Naive thymus-derived CD4-positive, alpha-beta T cell (primary cell): ENCODE measurements at regions of chr5 and their contacts with region 1.

Region 1: DNA sequence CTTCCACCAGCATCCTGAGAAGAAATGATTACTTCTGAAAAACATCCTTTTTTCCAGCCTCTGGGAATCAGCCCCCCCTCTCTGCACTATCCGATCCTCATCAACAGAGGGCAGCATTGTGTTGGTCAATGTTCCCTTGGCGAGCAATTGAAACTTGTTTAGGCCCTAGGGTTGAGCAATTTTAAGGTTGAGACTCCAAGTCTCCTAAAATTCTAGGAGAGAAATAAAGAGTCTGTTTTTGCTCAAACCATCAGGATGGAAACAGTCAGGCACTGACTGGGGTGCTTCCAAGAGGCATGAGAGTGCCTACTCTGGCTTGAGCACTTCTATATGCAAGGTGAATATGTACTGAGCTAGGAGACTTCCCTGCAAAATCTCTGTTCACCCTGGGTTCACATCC is 12.4 kb upstream of the CYFIP2 start:
- DNase-seq: no peak
- ATAC-seq: peak; percentile 44
- H3K4me3 ChIP-seq: peak overlapping the region; percentile 31
- H3K4me3 Mint-ChIP-seq: peak overlapping the region; percentile 62 to 79 (median 72)
- H3K27ac ChIP-seq: peak overlapping the region; percentile 66
- H3K27ac Mint-ChIP-seq: peak overlapping the region; percentile 86 to 98 (median 96)
- H3K4me1 ChIP-seq: peaks cover 93 to 97% of the 10 kb centered on the region in 2 donors
- H3K4me1 Mint-ChIP-seq: peaks cover 64 to 99% (median 94%) of the 10 kb centered on the region in 7 donors
- H3K27me3 ChIP-seq: no peaks in the 10 kb centered on the region
- H3K27me3 Mint-ChIP-seq: no peaks in the 10 kb centered on the region

Region 2: GRCh38 chr5:156618601-156619000 is 634.9 kb before region 1 on chr5:
- CTCF ChIA-PET with region 1: no interaction called
- POLR2A ChIA-PET with region 1: no interaction called
- intact Hi-C with region 1: no loop called
- DNase-seq: no peak
- ATAC-seq: no peak
- H3K4me3 ChIP-seq: no peak overlapping the region
- H3K4me3 Mint-ChIP-seq: no peak overlapping the region
- H3K27ac ChIP-seq: no peak overlapping the region
- H3K27ac Mint-ChIP-seq: no peak overlapping the region
- H3K4me1 ChIP-seq: no peaks in the 10 kb centered on the region
- H3K4me1 Mint-ChIP-seq: no peaks in the 10 kb centered on the region
- H3K27me3 ChIP-seq: no peaks in the 10 kb centered on the region
- H3K27me3 Mint-ChIP-seq: peaks cover 8 to 36% (median 28%) of the 10 kb centered on the region in 5 donors

Region 3: GRCh38 chr5:157159209-157159751 is 94.3 kb before region 1 on chr5:
- CTCF ChIA-PET with region 1: interaction called, 3 read pairs
- POLR2A ChIA-PET with region 1: interaction called, 12 read pairs
- intact Hi-C with region 1: no loop called
- DNase-seq: peak in 7 of 9 donors; percentile 31 to 76 (median 58)
- ATAC-seq: peak; percentile 84
- H3K4me3 ChIP-seq: peak overlapping the region; percentile 7
- H3K4me3 Mint-ChIP-seq: peak overlapping the region in 9 of 10 donors; percentile 42 to 76 (median 55)
- H3K27ac ChIP-seq: peak overlapping the region; percentile 67
- H3K27ac Mint-ChIP-seq: peak overlapping the region; percentile 68 to 84 (median 79)
- H3K4me1 ChIP-seq: peaks cover 43 to 44% of the 10 kb centered on the region in 2 donors
- H3K4me1 Mint-ChIP-seq: peaks cover 34 to 78% (median 70%) of the 10 kb centered on the region in 7 donors
- H3K27me3 ChIP-seq: no peaks in the 10 kb centered on the region
- H3K27me3 Mint-ChIP-seq: no peaks in the 10 kb centered on the region

Region 4: DNA sequence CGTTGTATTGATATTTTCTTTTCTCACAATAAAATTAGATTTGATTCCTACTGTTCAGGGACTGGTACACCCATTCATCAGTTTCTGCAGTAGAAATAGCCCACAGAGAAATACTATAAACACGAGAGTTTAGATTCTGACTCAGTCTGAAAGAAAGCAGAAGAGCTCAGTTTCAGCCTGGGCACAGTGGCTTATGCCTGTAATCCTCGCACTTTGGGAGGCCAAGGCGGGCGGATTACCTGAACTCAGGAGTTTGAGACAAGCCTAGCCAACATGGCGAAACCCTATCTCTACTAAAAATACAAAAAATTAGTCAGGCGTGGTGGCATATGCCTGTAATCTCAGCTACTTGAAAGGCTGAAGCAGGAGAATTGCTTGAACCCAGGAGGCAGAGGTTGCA is 64.3 kb before region 1 on chr5:
- CTCF ChIA-PET with region 1: interaction called, 6 read pairs
- POLR2A ChIA-PET with region 1: interaction called, 9 read pairs
- intact Hi-C with region 1: loop called in 1 of 2 experiments (anchors 2 kb)
- DNase-seq: no peak
- ATAC-seq: no peak
- H3K4me3 ChIP-seq: peak overlapping the region; percentile 68
- H3K4me3 Mint-ChIP-seq: peak overlapping the region; percentile 83 to 100 (median 96)
- H3K27ac ChIP-seq: peak overlapping the region; percentile 81
- H3K27ac Mint-ChIP-seq: peak overlapping the region; percentile 63 to 98 (median 91)
- H3K4me1 ChIP-seq: peaks cover 75 to 81% of the 10 kb centered on the region in 2 donors
- H3K4me1 Mint-ChIP-seq: peaks cover 56 to 94% (median 83%) of the 10 kb centered on the region in 7 donors
- H3K27me3 ChIP-seq: no peaks in the 10 kb centered on the region
- H3K27me3 Mint-ChIP-seq: no peaks in the 10 kb centered on the region

Region 5: GRCh38 chr5:157265714-157266285 is 12.3 kb after region 1 on chr5 and contains the start of gene CYFIP2:
- CTCF ChIA-PET with region 1: interaction called, 25 read pairs
- POLR2A ChIA-PET with region 1: interaction called, 200 read pairs
- intact Hi-C with region 1: loop called (anchors 1 kb)
- DNase-seq: peak; percentile 68 to 85 (median 84)
- ATAC-seq: peak; percentile 94
- H3K4me3 ChIP-seq: peak within 1 kb of the TSS; percentile 83
- H3K4me3 Mint-ChIP-seq: peak within 1 kb of the TSS; percentile 95 to 99 (median 97)
- H3K27ac ChIP-seq: peak within 1 kb of the TSS; percentile 84
- H3K27ac Mint-ChIP-seq: peak within 1 kb of the TSS; percentile 95 to 99 (median 98)
- H3K4me1 ChIP-seq: peaks cover 41 to 57% of the 10 kb centered on the region in 2 donors
- H3K4me1 Mint-ChIP-seq: peaks cover 51 to 76% (median 72%) of the 10 kb centered on the region in 7 donors
- H3K27me3 ChIP-seq: no peaks in the 10 kb centered on the region
- H3K27me3 Mint-ChIP-seq: no peaks in the 10 kb centered on the region
- total RNA-seq, gene CYFIP2: 386 to 449 (median 401) TPM

Region 6: DNA sequence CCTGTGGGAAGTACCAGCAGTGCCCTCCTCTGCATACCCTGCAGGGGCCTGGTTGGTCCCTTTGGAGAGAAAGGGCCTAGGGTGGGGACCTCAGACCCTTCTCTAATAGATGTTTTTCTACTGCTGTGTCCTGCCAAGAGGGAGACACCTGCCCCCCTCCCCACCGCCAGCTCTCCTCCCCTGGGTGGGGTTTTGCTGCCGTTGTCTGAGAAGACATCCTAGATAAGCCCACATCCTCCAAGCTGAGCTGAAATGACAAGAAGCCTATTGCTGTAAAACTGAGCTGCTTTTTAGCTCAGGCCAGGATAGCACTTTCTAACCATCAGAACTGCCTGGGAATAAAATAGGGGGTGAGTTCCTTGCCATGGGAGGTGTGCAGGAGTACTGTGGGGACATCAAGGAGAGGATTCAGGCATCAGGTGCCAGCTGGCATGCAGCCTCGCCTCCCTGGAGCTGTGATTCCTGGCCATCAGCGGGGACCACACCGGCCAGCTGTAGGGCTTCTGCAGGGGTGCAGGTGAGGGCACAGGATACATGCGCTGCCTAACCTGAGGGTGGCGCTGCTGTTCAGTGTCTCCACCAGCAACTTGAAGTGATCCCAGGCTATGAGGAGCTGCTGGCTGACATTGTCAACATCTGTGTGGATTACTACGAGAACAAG is 50.2 kb after region 1 on chr5:
- CTCF ChIA-PET with region 1: interaction called, 9 read pairs
- POLR2A ChIA-PET with region 1: interaction called, 27 read pairs
- intact Hi-C with region 1: loop called in 1 of 2 experiments (anchors 2 kb)
- DNase-seq: peak; percentile 38 to 79 (median 67)
- ATAC-seq: peak; percentile 80
- H3K4me3 ChIP-seq: peak overlapping the region; percentile 50
- H3K4me3 Mint-ChIP-seq: peak overlapping the region; percentile 71 to 89 (median 82)
- H3K27ac ChIP-seq: peak overlapping the region; percentile 62
- H3K27ac Mint-ChIP-seq: peak overlapping the region; percentile 83 to 97 (median 94)
- H3K4me1 ChIP-seq: peaks cover 51 to 56% of the 10 kb centered on the region in 2 donors
- H3K4me1 Mint-ChIP-seq: peaks cover 48 to 74% (median 65%) of the 10 kb centered on the region in 7 donors
- H3K27me3 ChIP-seq: no peaks in the 10 kb centered on the region
- H3K27me3 Mint-ChIP-seq: no peaks in the 10 kb centered on the region

Region 7: DNA sequence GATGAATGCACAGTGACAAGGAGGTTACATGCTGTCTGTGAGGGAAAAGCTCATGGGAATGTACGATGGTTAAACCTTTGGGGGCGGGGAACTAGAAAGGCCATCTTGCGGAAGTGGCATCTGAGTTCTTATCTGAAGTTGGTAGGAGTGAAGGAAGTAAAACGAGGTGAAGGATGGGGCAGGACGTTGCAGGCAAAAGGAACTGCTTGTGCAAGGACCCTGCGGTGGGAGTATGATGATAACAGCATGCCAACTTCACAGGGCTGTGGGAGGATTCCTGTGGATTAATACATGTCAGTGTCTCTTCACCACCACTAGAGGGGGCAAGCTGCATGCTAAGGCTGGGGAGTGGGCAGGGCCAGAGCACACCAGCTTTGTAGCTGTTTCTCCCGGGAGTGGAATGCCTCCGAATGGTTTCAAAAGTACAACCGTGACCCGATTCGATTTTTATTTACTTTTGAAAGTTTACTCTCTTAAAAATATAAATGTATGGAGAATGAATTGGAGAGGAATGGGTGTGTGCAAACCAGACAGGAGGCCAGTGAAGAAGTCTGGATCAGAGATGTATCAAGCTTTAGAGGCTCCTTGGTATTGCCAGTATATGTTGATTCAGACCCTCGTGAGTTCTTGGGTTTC is 74.8 kb after region 1 on chr5:
- CTCF ChIA-PET with region 1: interaction called, 7 read pairs
- POLR2A ChIA-PET with region 1: interaction called, 3 read pairs
- intact Hi-C with region 1: loop called in 1 of 2 experiments (anchors 1 kb)
- DNase-seq: peak in 8 of 9 donors; percentile 42 to 67 (median 60)
- ATAC-seq: peak; percentile 93
- H3K4me3 ChIP-seq: no peak overlapping the region
- H3K4me3 Mint-ChIP-seq: peak overlapping the region; percentile 29 to 80 (median 68)
- H3K27ac ChIP-seq: peak overlapping the region; percentile 63
- H3K27ac Mint-ChIP-seq: peak overlapping the region; percentile 71 to 95 (median 91)
- H3K4me1 ChIP-seq: peaks cover 10 to 24% of the 10 kb centered on the region in 2 donors
- H3K4me1 Mint-ChIP-seq: peaks cover 28 to 50% (median 45%) of the 10 kb centered on the region in 7 donors
- H3K27me3 ChIP-seq: no peaks in the 10 kb centered on the region
- H3K27me3 Mint-ChIP-seq: no peaks in the 10 kb centered on the region

Region 8: DNA sequence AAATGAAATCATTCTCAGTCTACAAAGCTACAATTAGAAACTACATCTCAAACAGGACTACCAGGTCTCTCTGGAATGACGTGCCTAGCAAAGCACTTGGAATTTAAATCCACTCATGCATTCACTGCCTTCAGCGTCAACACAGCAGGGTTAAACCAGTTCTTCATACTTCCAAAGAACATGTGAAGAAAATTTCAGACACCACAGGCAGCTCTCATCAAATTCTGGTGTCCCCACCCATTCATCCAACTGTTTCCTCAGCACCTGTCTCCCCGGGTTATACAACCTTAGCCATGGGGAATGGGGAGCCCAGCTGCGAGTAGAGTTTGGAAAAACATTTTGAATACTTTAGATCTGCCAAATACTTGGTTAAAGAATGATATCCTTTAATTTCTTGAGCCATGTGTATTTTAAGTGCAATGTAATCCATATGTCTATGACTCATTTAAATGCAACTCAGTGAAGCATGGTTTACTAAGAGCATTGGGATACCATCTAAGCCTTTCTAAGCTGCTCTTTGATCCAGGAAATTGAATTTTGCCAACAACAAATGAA is 304.6 kb after region 1 on chr5:
- CTCF ChIA-PET with region 1: no interaction called
- POLR2A ChIA-PET with region 1: no interaction called
- intact Hi-C with region 1: no loop called
- DNase-seq: no peak
- ATAC-seq: no peak
- H3K4me3 ChIP-seq: no peak overlapping the region
- H3K4me3 Mint-ChIP-seq: peak overlapping the region in 1 of 10 donors; percentile 31
- H3K27ac ChIP-seq: no peak overlapping the region
- H3K27ac Mint-ChIP-seq: no peak overlapping the region
- H3K4me1 ChIP-seq: peaks cover 0 to 10% of the 10 kb centered on the region in 2 donors
- H3K4me1 Mint-ChIP-seq: peaks cover 0 to 81% (median 0%) of the 10 kb centered on the region in 7 donors
- H3K27me3 ChIP-seq: no peaks in the 10 kb centered on the region
- H3K27me3 Mint-ChIP-seq: no peaks in the 10 kb centered on the region

Region 9: GRCh38 chr5:157785801-157786200 is 532.3 kb after region 1 on chr5:
- CTCF ChIA-PET with region 1: no interaction called
- POLR2A ChIA-PET with region 1: no interaction called
- intact Hi-C with region 1: no loop called
- DNase-seq: no peak
- ATAC-seq: no peak
- H3K4me3 ChIP-seq: no peak overlapping the region
- H3K4me3 Mint-ChIP-seq: no peak overlapping the region
- H3K27ac ChIP-seq: no peak overlapping the region
- H3K27ac Mint-ChIP-seq: no peak overlapping the region
- H3K4me1 ChIP-seq: no peaks in the 10 kb centered on the region
- H3K4me1 Mint-ChIP-seq: no peaks in the 10 kb centered on the region
- H3K27me3 ChIP-seq: no peaks in the 10 kb centered on the region
- H3K27me3 Mint-ChIP-seq: no peaks in the 10 kb centered on the region